Adrenal gland (tissue), 19 donors: ENCODE measurements at regions of chr20 and their contacts with region 1.

Region 1: GRCh38 chr20:21499641-21500040 is 14.2 kb downstream of the NKX2-2 start:
- DNase-seq: no peak
- H3K4me3 ChIP-seq: no peak overlapping the region
- H3K27ac ChIP-seq: no peak overlapping the region
- H3K4me1 ChIP-seq: no peaks in the 10 kb centered on the region
- H3K27me3 ChIP-seq: peaks cover 24% of the 10 kb centered on the region
- CTCF ChIP-seq: no peak
- POLR2A ChIP-seq: no peak

Region 2: DNA sequence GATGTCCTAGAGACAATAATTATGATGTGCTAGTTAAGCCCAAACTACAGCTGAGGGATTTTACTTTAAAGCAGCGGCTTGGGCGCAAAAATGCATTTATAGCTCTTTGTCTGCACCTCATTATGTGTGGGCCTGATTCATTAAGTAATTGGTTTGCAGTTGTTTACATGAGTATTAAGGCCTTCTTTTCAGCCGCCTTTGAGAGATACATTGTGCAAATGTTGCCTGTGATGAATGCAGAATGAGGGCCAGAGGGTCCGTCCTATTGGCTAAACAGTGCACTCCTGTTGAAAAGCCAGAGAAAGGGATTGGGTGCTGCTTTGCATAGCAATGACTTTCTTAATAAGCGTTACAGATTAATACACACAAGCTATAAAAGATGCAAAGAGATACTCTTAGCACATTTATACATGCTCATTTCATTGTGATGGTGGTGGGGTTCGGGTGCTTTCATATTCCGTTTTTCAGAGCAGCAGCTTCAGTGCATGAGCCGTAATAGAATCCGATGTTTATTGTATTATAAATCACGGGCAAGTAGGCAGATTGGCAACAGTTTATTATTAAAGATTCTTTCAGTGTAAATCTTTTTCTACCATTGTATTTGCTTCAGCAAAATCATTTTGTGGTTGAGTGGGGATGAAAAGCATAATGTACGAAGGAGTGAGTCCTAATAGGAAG is 264.7 kb before region 1 on chr20:
- intact Hi-C with region 1: loop called in 1 of 2 experiments (anchors 2 kb)
- DNase-seq: no peak
- H3K4me3 ChIP-seq: no peak overlapping the region
- H3K27ac ChIP-seq: no peak overlapping the region
- H3K4me1 ChIP-seq: peaks cover 5 to 7% of the 10 kb centered on the region in 2 donors
- H3K27me3 ChIP-seq: no peaks in the 10 kb centered on the region
- CTCF ChIP-seq: no peak
- POLR2A ChIP-seq: no peak